ENCODE measurements at regions of chrX and their contacts with region 1.

Region 1: GRCh38 chrX:46642145-46642544 is 68.6 kb downstream of the CHST7 start:
- DNase-seq: peak in 4 of 5 donors; percentile 39 to 46 (median 42)
- H3K4me3 ChIP-seq: no peak overlapping the region
- H3K4me3 Mint-ChIP-seq: peak overlapping the region in 1 of 8 donors; percentile 11
- H3K27ac ChIP-seq: no peak overlapping the region
- H3K27ac Mint-ChIP-seq: no peak overlapping the region
- H3K4me1 ChIP-seq: no peaks in the 10 kb centered on the region
- H3K4me1 Mint-ChIP-seq: peaks cover 4 to 13% (median 6%) of the 10 kb centered on the region in 4 donors
- H3K27me3 ChIP-seq: no peaks in the 10 kb centered on the region
- H3K27me3 Mint-ChIP-seq: no peaks in the 10 kb centered on the region

Region 2: GRCh38 chrX:46554942-46555341 is 87.2 kb before region 1 on chrX:
- CTCF ChIA-PET with region 1: interaction called, 19 read pairs
- POLR2A ChIA-PET with region 1: no interaction called
- intact Hi-C with region 1: loop called (anchors 1 kb)
- DNase-seq: peak in 3 of 5 donors; percentile 15 to 22 (median 15)
- H3K4me3 ChIP-seq: no peak overlapping the region
- H3K4me3 Mint-ChIP-seq: no peak overlapping the region
- H3K27ac ChIP-seq: no peak overlapping the region
- H3K27ac Mint-ChIP-seq: no peak overlapping the region
- H3K4me1 ChIP-seq: no peaks in the 10 kb centered on the region
- H3K4me1 Mint-ChIP-seq: no peaks in the 10 kb centered on the region
- H3K27me3 ChIP-seq: no peaks in the 10 kb centered on the region
- H3K27me3 Mint-ChIP-seq: no peaks in the 10 kb centered on the region

Region 3: DNA sequence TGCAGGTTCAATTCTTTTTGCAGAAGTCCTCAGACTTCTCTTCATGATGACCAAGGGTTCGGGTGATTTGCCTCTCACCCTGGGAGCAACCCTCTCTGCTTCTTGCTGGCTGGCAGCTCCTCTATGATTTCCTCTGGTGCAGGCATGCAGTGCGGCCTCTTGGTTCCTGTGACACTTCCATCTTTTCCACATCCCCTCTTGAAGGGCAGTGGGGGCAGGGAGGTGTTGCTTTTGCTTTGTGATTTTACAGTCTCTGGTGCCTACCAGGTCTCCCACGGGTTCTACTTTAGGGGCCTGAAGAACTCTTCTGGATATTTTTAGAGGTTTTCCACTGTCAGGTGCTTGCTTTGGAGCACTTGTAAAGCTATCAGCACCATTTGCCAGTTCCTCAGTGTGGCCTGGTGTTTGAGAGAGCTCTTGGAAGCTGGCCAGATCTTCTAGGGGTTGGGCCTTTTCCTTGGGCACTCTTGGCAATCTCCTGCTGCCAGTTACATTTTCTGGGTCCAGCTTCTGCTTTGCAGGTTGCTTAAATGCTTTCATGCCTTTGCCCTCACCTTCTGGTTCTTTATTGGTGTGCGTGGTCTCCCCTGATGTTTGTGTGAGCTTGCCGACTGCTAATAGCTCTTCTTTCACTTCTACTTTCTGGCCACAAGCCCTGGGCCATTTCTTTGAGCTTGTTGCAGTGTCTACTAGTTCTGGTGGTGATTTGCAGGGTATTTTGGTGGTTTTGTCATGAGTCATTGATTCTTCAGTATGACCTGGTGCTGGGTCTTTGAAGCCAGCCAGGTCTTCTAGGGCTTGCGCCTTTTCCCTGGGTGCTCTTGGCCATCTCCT is 80.1 kb before region 1 on chrX:
- CTCF ChIA-PET with region 1: interaction called, 19 read pairs
- POLR2A ChIA-PET with region 1: no interaction called
- intact Hi-C with region 1: no loop called
- DNase-seq: no peak
- H3K4me3 ChIP-seq: no peak overlapping the region
- H3K4me3 Mint-ChIP-seq: no peak overlapping the region
- H3K27ac ChIP-seq: no peak overlapping the region
- H3K27ac Mint-ChIP-seq: peak overlapping the region in 2 of 7 donors; percentile 26 to 37
- H3K4me1 ChIP-seq: peaks cover 6% of the 10 kb centered on the region
- H3K4me1 Mint-ChIP-seq: peaks cover 3 to 7% (median 5%) of the 10 kb centered on the region in 4 donors
- H3K27me3 ChIP-seq: no peaks in the 10 kb centered on the region
- H3K27me3 Mint-ChIP-seq: no peaks in the 10 kb centered on the region

Region 4: GRCh38 chrX:46662594-46662993 is 20.4 kb after region 1 on chrX:
- CTCF ChIA-PET with region 1: no interaction called
- POLR2A ChIA-PET with region 1: no interaction called
- intact Hi-C with region 1: no loop called
- DNase-seq: no peak
- H3K4me3 ChIP-seq: no peak overlapping the region
- H3K4me3 Mint-ChIP-seq: peak overlapping the region in 3 of 8 donors; percentile 12 to 45 (median 22)
- H3K27ac ChIP-seq: no peak overlapping the region
- H3K27ac Mint-ChIP-seq: no peak overlapping the region
- H3K4me1 ChIP-seq: no peaks in the 10 kb centered on the region
- H3K4me1 Mint-ChIP-seq: no peaks in the 10 kb centered on the region
- H3K27me3 ChIP-seq: no peaks in the 10 kb centered on the region
- H3K27me3 Mint-ChIP-seq: no peaks in the 10 kb centered on the region

Region 5: DNA sequence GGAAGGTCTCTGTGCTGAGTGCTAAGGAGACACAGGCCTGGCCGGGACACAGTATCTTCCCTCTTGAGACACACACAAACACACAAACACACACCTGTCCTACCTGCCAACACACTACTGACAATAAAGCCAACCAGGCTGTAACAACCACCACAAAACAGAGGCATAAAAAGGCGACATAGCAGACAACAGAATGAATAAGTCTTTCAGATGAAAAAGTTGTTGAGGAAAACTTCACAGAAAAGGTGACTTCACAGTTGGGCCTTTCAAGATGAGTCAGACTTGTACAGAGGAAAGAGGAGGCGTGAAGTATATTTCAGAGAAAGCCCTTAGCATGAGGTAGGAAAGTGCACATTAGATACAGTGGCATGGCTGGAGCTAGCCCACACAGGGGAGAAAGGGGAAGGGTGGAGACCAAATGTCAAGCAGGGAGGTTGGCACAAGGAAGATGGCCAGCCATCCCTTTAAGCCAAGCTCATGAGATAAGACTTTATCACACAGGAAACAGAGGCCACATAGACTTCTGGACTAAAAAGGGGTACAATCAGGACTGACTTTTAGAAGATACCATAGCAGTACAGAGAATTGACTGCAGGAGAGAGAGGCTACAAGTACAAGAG is 62.7 kb after region 1 on chrX:
- CTCF ChIA-PET with region 1: no interaction called
- POLR2A ChIA-PET with region 1: no interaction called
- intact Hi-C with region 1: no loop called
- DNase-seq: no peak
- H3K4me3 ChIP-seq: no peak overlapping the region
- H3K4me3 Mint-ChIP-seq: no peak overlapping the region
- H3K27ac ChIP-seq: no peak overlapping the region
- H3K27ac Mint-ChIP-seq: peak overlapping the region in 1 of 7 donors; percentile 9
- H3K4me1 ChIP-seq: no peaks in the 10 kb centered on the region
- H3K4me1 Mint-ChIP-seq: peaks cover 0 to 14% (median 7%) of the 10 kb centered on the region in 4 donors
- H3K27me3 ChIP-seq: no peaks in the 10 kb centered on the region
- H3K27me3 Mint-ChIP-seq: no peaks in the 10 kb centered on the region

Region 6: DNA sequence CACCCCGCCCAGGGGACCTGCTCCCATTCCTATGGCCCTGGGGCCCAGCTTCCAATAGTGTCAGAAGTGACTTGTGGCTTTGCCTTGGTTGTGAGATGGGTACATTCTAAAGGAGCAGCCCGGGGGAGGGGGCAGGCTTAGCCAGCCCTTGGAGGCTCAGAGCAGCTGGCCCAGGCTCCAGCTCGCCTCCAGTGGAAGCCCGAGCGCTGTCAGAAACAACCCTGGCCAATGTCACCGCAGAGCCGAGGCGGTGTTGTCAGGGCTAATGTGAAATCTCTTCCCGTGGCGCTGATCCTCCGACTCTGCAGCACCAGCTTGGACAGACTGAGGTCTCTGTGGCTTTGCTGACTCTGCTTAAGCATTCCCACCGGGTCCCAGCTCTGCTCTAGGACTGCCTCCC is 1165.4 kb after region 1 on chrX:
- CTCF ChIA-PET with region 1: no interaction called
- POLR2A ChIA-PET with region 1: no interaction called
- intact Hi-C with region 1: no loop called
- DNase-seq: no peak
- H3K4me3 ChIP-seq: no peak overlapping the region
- H3K4me3 Mint-ChIP-seq: no peak overlapping the region
- H3K27ac ChIP-seq: no peak overlapping the region
- H3K27ac Mint-ChIP-seq: peak overlapping the region in 1 of 7 donors; percentile 55
- H3K4me1 ChIP-seq: no peaks in the 10 kb centered on the region
- H3K4me1 Mint-ChIP-seq: no peaks in the 10 kb centered on the region
- H3K27me3 ChIP-seq: no peaks in the 10 kb centered on the region
- H3K27me3 Mint-ChIP-seq: peaks cover 0 to 1% of the 10 kb centered on the region in 2 donors

Measured in CD4-positive, alpha-beta memory T cell (primary cell).